ENCODE measurements at regions of chr19 and their contacts with region 1.

Region 1: DNA sequence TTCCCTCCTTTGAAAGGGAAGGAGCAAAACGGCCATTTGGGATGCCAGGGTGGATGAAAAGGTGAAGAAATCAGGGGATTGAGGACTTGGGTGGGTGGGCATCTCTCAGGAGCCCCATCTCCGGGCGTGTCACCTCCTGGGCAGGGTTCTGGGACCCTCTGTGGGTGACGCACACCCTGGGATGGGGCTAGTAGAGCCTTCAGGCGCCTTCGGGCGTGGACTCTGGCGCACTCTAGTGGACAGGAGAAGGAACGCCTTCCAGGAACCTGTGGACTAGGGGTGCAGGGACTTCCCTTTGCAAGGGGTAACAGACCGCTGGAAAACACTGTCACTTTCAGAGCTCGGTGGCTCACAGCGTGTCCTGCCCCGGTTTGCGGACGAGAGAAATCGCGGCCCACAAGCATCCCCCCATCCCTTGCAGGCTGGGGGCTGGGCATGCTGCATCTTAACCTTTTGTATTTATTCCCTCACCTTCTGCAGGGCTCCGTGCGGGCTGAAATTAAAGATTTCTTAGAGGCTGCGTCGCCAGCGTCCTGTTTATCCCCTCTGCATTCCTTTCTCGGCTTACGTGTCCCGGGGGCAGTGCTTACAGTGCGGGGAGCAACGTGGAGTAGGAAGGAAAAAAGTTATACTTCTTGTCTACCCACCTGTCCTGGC is 15.2 kb upstream of the S1PR4 start:
- DNase-seq: peak; percentile 80
- ATAC-seq: peak; percentile 93
- H3K4me3 ChIP-seq: peak overlapping the region; percentile 69
- H3K27ac ChIP-seq: peak overlapping the region; percentile 10
- H3K4me1 ChIP-seq: peaks cover 15% of the 10 kb centered on the region
- H3K27me3 ChIP-seq: no peaks in the 10 kb centered on the region
- CTCF ChIP-seq: peak; percentile 86

Region 2: DNA sequence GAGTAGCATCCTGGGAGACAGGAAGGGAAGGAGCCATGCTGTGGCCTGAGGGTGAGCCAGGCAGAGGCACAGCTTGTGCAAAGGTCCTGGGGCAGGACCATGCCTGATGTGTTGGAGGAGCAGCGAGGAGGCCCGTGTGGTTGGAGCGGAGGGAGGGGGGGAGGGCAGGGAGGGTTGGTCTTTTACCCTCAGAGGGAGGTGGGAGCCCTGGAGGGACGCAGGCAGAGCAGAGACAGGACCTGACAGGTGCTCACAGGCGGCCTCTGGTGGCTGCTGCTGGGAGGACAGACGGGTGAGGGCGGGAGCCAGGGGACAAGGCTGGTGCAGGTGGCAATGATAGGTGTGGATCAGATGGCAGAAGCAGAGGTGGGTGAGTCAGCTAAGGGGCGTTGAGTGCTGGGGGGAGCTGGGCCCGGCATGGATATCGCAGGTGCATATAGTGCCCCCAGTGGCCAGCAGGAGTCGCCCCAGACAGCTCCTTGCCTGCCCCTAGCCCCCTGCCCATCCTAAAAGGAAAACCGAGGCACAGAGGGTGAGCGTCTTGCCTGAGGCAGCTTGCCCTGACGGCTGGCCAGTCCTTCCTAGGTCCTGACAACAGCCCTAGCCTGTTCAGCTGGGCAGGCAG is 37.3 kb before region 1 on chr19:
- CTCF ChIA-PET with region 1: interaction called, 28 read pairs
- POLR2A ChIA-PET with region 1: no interaction called
- intact Hi-C with region 1: loop called (anchors 1 kb)
- DNase-seq: peak; percentile 65
- ATAC-seq: peak; percentile 86
- H3K4me3 ChIP-seq: no peak overlapping the region
- H3K27ac ChIP-seq: no peak overlapping the region
- H3K4me1 ChIP-seq: no peaks in the 10 kb centered on the region
- H3K27me3 ChIP-seq: no peaks in the 10 kb centered on the region
- CTCF ChIP-seq: peak; percentile 71

Region 3: DNA sequence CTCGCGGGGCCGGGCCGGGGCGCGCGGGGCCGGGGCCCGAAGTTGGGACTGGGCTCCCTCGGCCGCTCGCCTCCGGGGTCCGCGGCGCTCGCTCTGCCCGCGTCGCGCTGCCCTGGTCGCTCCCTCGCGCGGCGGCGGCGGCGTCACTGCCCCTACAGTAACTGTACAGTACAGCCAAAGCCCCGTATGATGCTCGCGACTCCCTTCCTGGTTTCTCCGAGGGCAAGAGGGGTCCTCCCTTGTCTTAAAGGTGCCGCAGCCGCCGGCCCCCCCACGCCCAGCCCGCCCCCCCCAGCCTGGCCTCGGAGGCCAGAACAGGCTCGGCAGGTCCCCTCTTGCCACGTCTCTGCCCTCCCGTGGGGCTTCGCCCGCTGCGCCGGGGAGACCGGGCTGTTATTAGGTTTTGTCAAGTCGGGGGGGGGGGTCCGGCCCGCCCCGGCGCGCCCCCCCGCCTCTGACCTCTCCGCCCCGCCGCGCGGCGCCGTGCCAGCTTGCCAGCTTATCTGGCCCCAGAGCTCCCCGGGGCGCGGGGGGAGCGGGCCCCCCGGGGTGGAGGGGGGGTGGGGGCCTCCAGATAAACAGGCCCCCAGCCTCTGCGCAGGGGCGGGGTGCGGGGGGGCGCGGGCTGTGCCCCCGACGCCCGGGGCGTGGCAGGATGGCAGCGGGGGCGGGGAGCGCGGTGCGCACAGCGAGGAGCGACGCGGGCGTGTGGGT is 903.5 kb after region 1 on chr19 and contains the start of gene ZBTB7A:
- CTCF ChIA-PET with region 1: no interaction called
- POLR2A ChIA-PET with region 1: interaction called, 16 read pairs
- intact Hi-C with region 1: no loop called
- DNase-seq: peak; percentile 53
- ATAC-seq: peak; percentile 25
- H3K4me3 ChIP-seq: peak within 1 kb of the TSS; percentile 76
- H3K27ac ChIP-seq: no peak within 1 kb of the TSS
- H3K4me1 ChIP-seq: peaks cover 17% of the 10 kb centered on the region
- H3K27me3 ChIP-seq: no peaks in the 10 kb centered on the region
- CTCF ChIP-seq: no peak
- total RNA-seq, gene ZBTB7A: 16.7 and 40.2 TPM in 2 replicates